IMR-90 (cell line): ENCODE measurements at regions of chr18 and their contacts with region 1.

Region 1: DNA sequence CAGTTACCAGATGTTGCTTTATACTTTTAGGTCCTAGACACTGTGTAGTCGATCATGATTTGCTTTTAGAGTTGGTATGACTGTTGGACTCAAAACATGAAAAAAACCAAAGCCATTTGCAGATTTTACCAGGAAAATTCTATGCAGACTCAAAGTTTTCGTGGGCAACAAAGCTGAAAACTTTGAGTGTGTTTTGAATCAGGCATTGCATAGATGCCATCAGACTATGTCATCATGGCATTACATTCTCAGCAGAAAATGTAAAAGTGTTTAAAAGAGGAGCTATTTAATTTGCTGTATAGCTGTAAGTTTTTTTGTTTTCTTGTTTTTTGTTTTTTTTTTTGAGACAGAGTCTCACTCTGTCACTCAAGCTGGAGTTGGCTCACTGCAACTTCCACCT is 43.5 kb upstream of the ELAC1 start:
- DNase-seq: peak; percentile 51
- ATAC-seq: peak; percentile 72
- H3K4me3 ChIP-seq: no peak overlapping the region
- H3K27ac ChIP-seq: no peak overlapping the region
- H3K4me1 ChIP-seq: 0 out of 2 replicates have a peak, but pooled peaks cover 1% of the 10 kb centered on the region
- H3K27me3 ChIP-seq: no peaks in the 10 kb centered on the region
- CTCF ChIP-seq: no peak
- POLR2A ChIP-seq: no peak
- RAD21 ChIP-seq: no peak

Region 2: DNA sequence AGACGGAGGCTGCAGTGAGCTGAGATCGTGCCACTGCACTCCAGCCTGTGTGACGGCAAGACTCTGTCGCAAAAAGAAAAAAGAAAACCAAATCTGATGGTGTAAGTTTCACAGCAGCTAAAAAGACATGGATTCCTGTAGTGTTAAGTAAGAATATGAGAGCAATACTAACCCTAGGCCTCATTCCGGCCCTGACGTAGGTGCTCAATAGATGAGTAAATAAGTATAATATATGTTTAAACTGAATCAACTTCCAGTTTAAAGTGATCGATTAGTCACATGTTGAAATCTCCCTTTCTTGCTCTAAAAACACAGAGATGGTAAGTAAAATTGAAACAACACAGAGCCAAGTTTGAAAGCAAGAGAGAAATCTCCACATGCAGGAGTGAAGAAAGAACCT is 37.4 kb before region 1 on chr18:
- CTCF ChIA-PET with region 1: no interaction called
- POLR2A ChIA-PET with region 1: no interaction called
- dilution Hi-C with region 1: no loop called
- in situ Hi-C with region 1: no loop called
- intact Hi-C with region 1: loop called (anchors 5 kb)
- DNase-seq: no peak
- ATAC-seq: no peak
- H3K4me3 ChIP-seq: no peak overlapping the region
- H3K27ac ChIP-seq: no peak overlapping the region
- H3K4me1 ChIP-seq: no peaks in the 10 kb centered on the region
- H3K27me3 ChIP-seq: no peaks in the 10 kb centered on the region
- CTCF ChIP-seq: no peak
- POLR2A ChIP-seq: no peak
- RAD21 ChIP-seq: no peak